A549 (cell line): ENCODE measurements at regions of chr3 and their contacts with region 1.

Region 1: DNA sequence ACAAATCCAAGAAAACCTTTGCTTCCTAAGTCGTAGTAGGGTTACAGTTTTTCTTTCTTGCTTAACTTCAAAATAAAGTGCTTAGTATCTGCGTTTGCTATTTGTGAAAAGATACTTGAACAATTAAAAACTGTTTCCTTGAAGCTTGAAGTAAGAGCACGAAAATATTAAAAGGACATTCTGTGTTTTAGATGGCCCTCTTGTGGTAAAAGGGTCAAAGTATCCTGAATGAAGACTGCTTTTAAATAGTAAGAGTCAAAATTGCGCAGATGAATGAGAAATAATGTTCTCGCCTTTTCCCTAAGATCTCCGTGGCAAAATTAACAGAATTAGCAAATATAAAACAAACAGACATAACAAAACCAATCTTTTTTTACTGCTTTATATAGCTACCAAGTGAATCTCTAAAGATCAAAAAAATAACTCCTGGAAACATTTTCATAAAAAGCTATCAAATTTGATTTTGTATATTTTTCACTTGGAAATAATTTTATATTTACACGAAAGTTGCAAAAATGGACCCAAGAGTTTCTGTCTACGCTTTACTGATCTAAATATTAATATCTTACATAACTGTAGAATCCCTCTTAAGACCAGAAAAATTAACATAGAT is 175.4 kb downstream of the MBNL1 start:
- DNase-seq: peak; percentile 7 to 73
- ATAC-seq: peak; percentile 64 to 78; a peak in 5 of 6 replicates
- H3K4me3 ChIP-seq: no peak overlapping the region
- H3K27ac ChIP-seq: peak overlapping the region in 1 of 2 experiments; percentile 59; a peak in 1 of 6 replicates
- H3K4me1 ChIP-seq: peaks cover 31% of the 10 kb centered on the region
- CTCF ChIP-seq: peak; percentile 91
- EP300 ChIP-seq: no peak
- POLR2A ChIP-seq: no peak
- RAD21 ChIP-seq: peak; percentile 86 to 94

Region 2: GRCh38 chr3:152177757-152178156 is 266.4 kb before region 1 on chr3:
- CTCF ChIA-PET with region 1: interaction called, 11 read pairs
- POLR2A ChIA-PET with region 1: no interaction called
- DNase-seq: no peak
- ATAC-seq: no peak
- H3K4me3 ChIP-seq: no peak overlapping the region
- H3K27ac ChIP-seq: no peak overlapping the region
- H3K4me1 ChIP-seq: peaks cover 23% of the 10 kb centered on the region
- CTCF ChIP-seq: no peak
- EP300 ChIP-seq: no peak
- POLR2A ChIP-seq: no peak
- RAD21 ChIP-seq: no peak

Region 3: GRCh38 chr3:152430223-152431002 is 13.7 kb before region 1 on chr3:
- CTCF ChIA-PET with region 1: interaction called, 12 read pairs
- POLR2A ChIA-PET with region 1: no interaction called
- DNase-seq: no peak
- ATAC-seq: no peak
- H3K4me3 ChIP-seq: no peak overlapping the region
- H3K27ac ChIP-seq: no peak overlapping the region
- H3K4me1 ChIP-seq: no peaks in the 10 kb centered on the region; the same call in 2 of the 3 replicates
- CTCF ChIP-seq: no peak
- EP300 ChIP-seq: no peak
- POLR2A ChIP-seq: no peak
- RAD21 ChIP-seq: no peak

Region 4: DNA sequence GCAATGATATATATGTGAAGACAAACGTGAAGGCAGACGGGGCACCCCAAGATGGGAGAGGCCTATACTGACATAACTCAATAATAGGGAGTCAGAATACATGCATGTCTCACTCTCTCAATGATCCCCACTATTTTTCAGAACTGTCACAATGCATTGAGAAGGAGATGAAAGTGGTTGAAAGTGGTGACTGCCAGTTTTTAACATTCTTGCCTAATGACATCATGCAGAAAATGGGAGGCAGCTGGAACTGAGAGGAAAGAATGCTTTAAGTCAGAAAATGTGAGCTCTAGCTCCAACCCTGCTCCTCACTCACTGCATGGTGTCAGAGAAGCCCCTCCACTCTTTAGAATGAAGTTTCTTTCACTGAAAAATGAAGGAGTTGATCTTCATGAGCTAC is 335.5 kb after region 1 on chr3:
- CTCF ChIA-PET with region 1: no interaction called
- POLR2A ChIA-PET with region 1: no interaction called
- DNase-seq: no peak
- ATAC-seq: no peak
- H3K4me3 ChIP-seq: no peak overlapping the region
- H3K27ac ChIP-seq: no peak overlapping the region
- H3K4me1 ChIP-seq: no peaks in the 10 kb centered on the region
- CTCF ChIP-seq: no peak
- EP300 ChIP-seq: no peak
- POLR2A ChIP-seq: no peak
- RAD21 ChIP-seq: no peak